ENCODE measurements at regions of chr19 and their contacts with region 1.

Region 1: DNA sequence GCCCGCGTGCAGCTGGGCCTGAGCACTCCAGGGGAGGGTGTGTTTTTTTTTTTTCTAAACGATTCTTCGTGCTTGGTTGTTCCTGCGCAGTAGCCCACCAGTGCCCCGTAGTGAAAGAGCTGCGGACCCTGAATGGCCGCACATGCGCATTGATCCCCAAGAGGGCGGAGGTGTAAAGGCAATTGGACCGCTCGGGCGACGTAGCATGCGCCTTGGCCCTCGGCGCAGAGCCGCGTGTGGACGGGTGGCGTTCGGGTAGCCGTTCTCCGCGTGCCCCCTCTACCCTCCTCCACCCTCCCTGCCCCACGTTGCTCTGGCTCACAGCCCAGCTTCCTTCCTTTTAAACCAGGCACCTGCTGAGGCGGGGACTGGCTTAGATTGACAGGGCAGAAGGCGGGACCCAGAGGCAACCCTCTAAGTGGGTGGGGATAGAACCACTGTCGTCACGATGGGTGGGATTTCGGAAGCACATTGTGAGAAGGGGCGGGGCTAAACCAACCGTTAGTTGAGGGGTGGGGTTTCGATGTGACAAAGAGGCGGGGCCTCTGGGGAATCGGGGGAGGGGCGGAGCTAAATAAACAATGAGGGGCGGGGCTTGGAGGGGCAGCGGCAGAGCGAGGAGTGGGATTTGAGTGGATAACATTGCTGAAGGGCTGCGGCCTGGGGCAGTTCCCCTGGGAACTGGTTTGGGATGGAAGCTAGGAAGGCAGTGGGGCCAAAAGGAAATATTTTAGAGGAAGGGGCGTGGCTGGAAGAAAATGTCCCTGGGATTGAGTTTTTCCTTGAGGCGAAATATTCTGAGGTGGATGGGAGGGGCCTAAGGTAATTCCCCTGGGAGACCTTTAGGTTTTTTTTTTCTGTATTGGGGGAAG is 543 bp upstream of the NUP62 start:
- DNase-seq: peak; percentile 86
- ATAC-seq: peak; percentile 88
- H3K4me3 ChIP-seq: peak overlapping the region; percentile 85 to 88
- H3K27ac ChIP-seq: peak overlapping the region; percentile 99
- H3K4me1 ChIP-seq: peaks cover 12% of the 10 kb centered on the region
- H3K27me3 ChIP-seq: no peaks in the 10 kb centered on the region
- CTCF ChIP-seq: no peak

Region 2: GRCh38 chr19:49869441-49870176 is 60.2 kb before region 1 on chr19:
- CTCF ChIA-PET with region 1: no interaction called
- POLR2A ChIA-PET with region 1: interaction called, 10 read pairs
- in situ Hi-C with region 1: no loop called
- intact Hi-C with region 1: no loop called
- DNase-seq: peak; percentile 97
- ATAC-seq: peak; percentile 80
- H3K4me3 ChIP-seq: peak overlapping the region; percentile 39 to 55
- H3K27ac ChIP-seq: peak overlapping the region; percentile 82
- H3K4me1 ChIP-seq: peaks cover 19% of the 10 kb centered on the region
- H3K27me3 ChIP-seq: no peaks in the 10 kb centered on the region
- CTCF ChIP-seq: no peak

Region 3: DNA sequence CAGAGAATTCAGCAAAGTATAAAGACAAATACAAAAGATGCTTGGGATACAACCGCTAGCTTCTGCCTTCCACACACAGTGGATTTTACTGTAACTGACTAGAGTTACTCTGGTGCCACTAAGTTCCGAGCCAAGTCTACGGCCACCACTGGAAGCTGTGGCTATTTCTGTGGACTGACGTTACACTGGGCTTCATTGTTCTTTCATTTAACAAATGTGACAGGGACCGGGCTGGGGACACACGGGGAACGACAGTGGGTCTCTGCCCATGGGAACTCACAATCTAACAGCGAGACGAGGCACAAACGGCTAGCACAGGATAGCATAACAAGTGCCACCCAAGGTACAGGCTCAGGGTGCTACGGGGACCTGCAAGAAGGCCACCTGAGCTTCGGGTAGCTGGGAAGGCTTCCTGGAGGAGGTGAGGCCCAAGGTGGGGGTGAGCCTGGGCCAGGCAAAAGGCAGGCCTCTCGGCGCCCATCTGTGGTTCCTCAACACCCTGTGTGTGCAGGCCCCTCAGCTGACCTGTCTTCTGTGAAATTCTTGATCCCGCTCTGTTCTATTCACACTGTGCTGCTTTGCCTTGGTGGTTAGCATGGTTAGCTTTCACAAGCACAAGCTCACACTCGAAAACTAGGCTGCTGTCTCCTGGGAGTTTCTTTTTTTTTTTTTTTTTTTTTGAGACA is 22.8 kb before region 1 on chr19:
- CTCF ChIA-PET with region 1: interaction called, 3 read pairs
- POLR2A ChIA-PET with region 1: interaction called, 16 read pairs
- in situ Hi-C with region 1: no loop called
- intact Hi-C with region 1: no loop called
- DNase-seq: no peak
- ATAC-seq: no peak
- H3K4me3 ChIP-seq: no peak overlapping the region
- H3K27ac ChIP-seq: no peak overlapping the region
- H3K4me1 ChIP-seq: no peaks in the 10 kb centered on the region
- H3K27me3 ChIP-seq: no peaks in the 10 kb centered on the region
- CTCF ChIP-seq: no peak

Region 4: GRCh38 chr19:49949744-49950589 is 20.1 kb after region 1 on chr19:
- CTCF ChIA-PET with region 1: no interaction called
- POLR2A ChIA-PET with region 1: no interaction called
- in situ Hi-C with region 1: no loop called
- intact Hi-C with region 1: no loop called
- DNase-seq: no peak
- ATAC-seq: no peak
- H3K4me3 ChIP-seq: no peak overlapping the region
- H3K27ac ChIP-seq: no peak overlapping the region
- H3K4me1 ChIP-seq: no peaks in the 10 kb centered on the region
- H3K27me3 ChIP-seq: no peaks in the 10 kb centered on the region
- CTCF ChIP-seq: no peak

Region 5: GRCh38 chr19:50039968-50040367 is 110.1 kb after region 1 on chr19:
- CTCF ChIA-PET with region 1: no interaction called
- POLR2A ChIA-PET with region 1: no interaction called
- in situ Hi-C with region 1: no loop called
- intact Hi-C with region 1: no loop called
- DNase-seq: no peak
- ATAC-seq: no peak
- H3K4me3 ChIP-seq: no peak overlapping the region
- H3K27ac ChIP-seq: no peak overlapping the region
- H3K4me1 ChIP-seq: no peaks in the 10 kb centered on the region
- H3K27me3 ChIP-seq: no peaks in the 10 kb centered on the region
- CTCF ChIP-seq: no peak

Region 6: DNA sequence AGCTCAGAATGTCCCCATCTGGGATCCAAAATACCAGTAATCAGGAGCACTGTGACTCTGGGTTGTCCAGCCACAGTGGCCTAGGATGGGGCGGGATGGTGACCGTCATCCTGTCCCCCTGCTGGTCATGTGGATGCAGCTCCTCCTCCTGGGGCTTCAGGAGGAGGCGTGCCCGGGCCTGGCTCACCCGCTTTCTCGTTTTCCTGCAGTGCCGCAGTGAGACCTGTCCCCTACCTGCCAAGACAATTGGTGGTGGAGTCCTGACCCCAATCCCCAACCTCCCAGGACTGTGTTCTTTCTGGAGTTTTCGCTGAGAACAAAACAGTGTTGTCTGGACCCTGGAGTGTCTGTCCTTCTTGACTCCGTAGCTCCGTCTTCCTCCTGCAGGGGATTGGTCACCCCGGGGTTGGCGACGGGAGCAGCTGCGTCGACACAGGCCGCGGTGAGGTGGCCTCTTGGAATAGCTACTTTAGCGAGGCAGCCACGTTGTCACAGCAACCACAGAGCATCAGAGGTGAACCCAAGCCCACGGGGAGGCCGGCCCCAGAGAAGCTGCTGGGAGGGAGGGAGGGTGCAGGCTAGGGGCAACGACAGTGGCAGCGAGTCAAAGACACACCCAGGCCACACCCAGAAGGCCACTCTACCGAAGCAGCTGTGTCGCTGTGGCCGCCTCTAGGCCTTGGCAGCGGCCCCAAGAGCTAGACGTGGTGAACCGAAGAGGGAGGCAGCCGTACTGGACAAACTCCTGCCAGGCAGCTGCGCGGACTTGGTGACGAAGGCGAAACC is 536.3 kb after region 1 on chr19:
- CTCF ChIA-PET with region 1: no interaction called
- POLR2A ChIA-PET with region 1: no interaction called
- in situ Hi-C with region 1: no loop called
- intact Hi-C with region 1: no loop called
- DNase-seq: no peak
- ATAC-seq: no peak
- H3K4me3 ChIP-seq: no peak overlapping the region
- H3K27ac ChIP-seq: no peak overlapping the region
- H3K4me1 ChIP-seq: no peaks in the 10 kb centered on the region; the same call in 1 of the 2 replicates
- H3K27me3 ChIP-seq: no peaks in the 10 kb centered on the region
- CTCF ChIP-seq: no peak